ENCODE measurements at regions of chrX and their contacts with region 1.

Region 1: DNA sequence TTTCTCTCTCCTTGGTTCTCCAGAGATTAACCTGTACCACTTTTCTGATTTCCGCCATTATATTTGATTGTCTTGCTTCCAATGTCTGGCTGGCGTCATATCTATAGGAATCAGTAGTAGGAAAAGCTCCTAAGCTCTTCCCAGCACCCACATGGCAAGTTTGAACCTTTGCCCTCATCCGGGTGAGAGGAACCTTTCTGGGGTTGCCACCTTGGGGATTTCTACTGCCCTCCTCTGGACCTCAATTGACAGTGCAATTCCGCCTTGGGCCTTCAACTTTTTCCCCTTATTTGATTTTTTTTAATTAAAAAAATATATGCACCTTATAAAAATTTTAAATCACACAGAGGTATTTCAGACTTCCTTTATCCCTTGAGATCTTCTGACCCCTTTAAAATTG is 2.0 kb upstream of the CXorf66 start:
- DNase-seq: no peak
- H3K4me3 Mint-ChIP-seq: no peak overlapping the region
- H3K27ac Mint-ChIP-seq: no peak overlapping the region
- H3K4me1 Mint-ChIP-seq: no peaks in the 10 kb centered on the region
- H3K27me3 Mint-ChIP-seq: peaks cover 11% of the 10 kb centered on the region

Region 2: GRCh38 chrX:138775517-138775916 is 1191.8 kb before region 1 on chrX:
- intact Hi-C with region 1: loop called (anchors 10 kb)
- DNase-seq: no peak
- H3K4me3 Mint-ChIP-seq: no peak overlapping the region
- H3K27ac Mint-ChIP-seq: no peak overlapping the region
- H3K4me1 Mint-ChIP-seq: no peaks in the 10 kb centered on the region
- H3K27me3 Mint-ChIP-seq: no peaks in the 10 kb centered on the region

Region 3: GRCh38 chrX:139881572-139881971 is 85.7 kb before region 1 on chrX:
- intact Hi-C with region 1: no loop called
- DNase-seq: no peak
- H3K4me3 Mint-ChIP-seq: no peak overlapping the region
- H3K27ac Mint-ChIP-seq: no peak overlapping the region
- H3K4me1 Mint-ChIP-seq: peaks cover 11% of the 10 kb centered on the region
- H3K27me3 Mint-ChIP-seq: no peaks in the 10 kb centered on the region

Region 4: GRCh38 chrX:140065961-140066662 is 98.8 kb after region 1 on chrX:
- intact Hi-C with region 1: no loop called
- DNase-seq: no peak
- H3K4me3 Mint-ChIP-seq: no peak overlapping the region
- H3K27ac Mint-ChIP-seq: no peak overlapping the region
- H3K4me1 Mint-ChIP-seq: no peaks in the 10 kb centered on the region
- H3K27me3 Mint-ChIP-seq: no peaks in the 10 kb centered on the region

Region 5: GRCh38 chrX:140249088-140249487 is 281.8 kb after region 1 on chrX:
- intact Hi-C with region 1: no loop called
- DNase-seq: no peak
- H3K4me3 Mint-ChIP-seq: no peak overlapping the region
- H3K27ac Mint-ChIP-seq: no peak overlapping the region
- H3K4me1 Mint-ChIP-seq: no peaks in the 10 kb centered on the region
- H3K27me3 Mint-ChIP-seq: no peaks in the 10 kb centered on the region

Measured in activated T-helper 2 cell treated with anti-CD3 and anti-CD28 coated beads, Interferon-gamma antibody, Interleukin-2, Interleukin-4, amounts not matched to agents 10 μg/mL and 5 μg/mL and 100 μg/mL, durations not matched to agents 14 hours and 24 hours and 36 hours (primary cell).